ENCODE measurements at regions of chr3 and their contacts with region 1.

Region 1: DNA sequence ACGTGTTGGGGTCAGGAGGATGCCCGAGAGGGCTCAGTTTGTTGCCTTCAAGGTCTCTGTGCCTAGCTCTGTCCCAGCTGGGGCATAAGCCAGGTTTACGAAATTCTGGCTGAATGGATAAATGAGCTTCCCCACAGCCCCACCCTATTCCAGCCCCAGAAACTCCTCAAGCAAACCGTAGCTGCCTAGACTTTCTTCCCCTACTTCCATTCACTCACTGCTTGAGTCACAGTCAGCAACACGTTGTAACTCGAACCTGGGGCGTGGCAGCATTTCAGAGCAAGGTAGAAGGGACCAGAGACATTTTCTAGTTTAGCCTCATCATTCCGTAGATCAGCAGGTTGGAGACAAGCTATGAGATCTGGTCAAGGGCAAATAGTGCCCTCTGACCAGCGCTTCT is 24.2 kb downstream of the NMNAT3 start:
- DNase-seq: peak; percentile 95
- H3K4me3 ChIP-seq: no peak overlapping the region
- H3K27ac ChIP-seq: peak overlapping the region; percentile 61
- H3K4me1 ChIP-seq: peaks cover 21% of the 10 kb centered on the region
- H3K27me3 ChIP-seq: no peaks in the 10 kb centered on the region
- CTCF ChIP-seq: no peak

Region 2: DNA sequence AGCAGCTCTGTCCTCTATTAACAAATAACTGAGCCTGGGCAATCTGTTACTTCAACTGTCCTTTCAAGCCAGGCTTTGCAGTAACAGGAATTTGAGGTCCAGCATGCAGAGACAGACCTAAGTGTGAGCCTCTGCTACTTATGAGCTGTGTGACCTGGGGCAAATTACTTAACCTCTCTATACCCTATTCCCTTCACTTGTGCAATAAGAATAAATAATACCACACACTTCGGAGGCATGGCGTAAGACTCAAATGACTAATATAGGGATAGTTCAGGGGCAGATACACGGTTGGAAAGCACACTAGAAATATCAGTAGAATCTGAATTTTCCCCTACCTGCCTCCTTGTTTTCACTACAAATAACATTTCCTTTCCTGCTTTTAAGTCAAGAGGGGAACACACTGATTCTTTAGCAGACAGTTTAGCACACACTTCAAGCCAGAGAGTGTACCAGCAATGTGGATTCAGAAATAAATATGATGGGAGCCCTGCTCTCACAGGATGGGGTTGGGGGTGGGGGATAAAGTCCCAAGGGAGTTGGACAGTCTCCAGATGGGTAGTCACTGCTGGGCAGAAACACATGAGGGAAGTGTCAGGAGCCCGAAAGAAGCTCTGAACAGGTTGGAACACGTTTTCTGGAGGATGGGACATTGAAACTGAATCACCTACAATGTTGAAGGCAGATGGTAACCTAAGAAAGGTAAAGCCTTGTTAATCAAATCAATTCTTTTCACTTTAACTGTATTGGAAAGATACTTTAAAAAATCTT is 52.2 kb before region 1 on chr3:
- CTCF ChIA-PET with region 1: no interaction called
- dilution Hi-C with region 1: no loop called
- in situ Hi-C with region 1: no loop called
- intact Hi-C with region 1: loop called (anchors 2 kb)
- DNase-seq: peak; percentile 91
- H3K4me3 ChIP-seq: peak overlapping the region in 2 of 3 experiments; percentile 15 to 22
- H3K27ac ChIP-seq: peak overlapping the region; percentile 91
- H3K4me1 ChIP-seq: peaks cover 20% of the 10 kb centered on the region
- H3K27me3 ChIP-seq: no peaks in the 10 kb centered on the region
- CTCF ChIP-seq: no peak

Region 3: GRCh38 chr3:140023616-140024530 is 370.3 kb after region 1 on chr3:
- CTCF ChIA-PET with region 1: no interaction called
- dilution Hi-C with region 1: no loop called
- in situ Hi-C with region 1: no loop called
- intact Hi-C with region 1: no loop called
- DNase-seq: no peak
- H3K4me3 ChIP-seq: no peak overlapping the region
- H3K27ac ChIP-seq: no peak overlapping the region
- H3K4me1 ChIP-seq: no peaks in the 10 kb centered on the region
- H3K27me3 ChIP-seq: no peaks in the 10 kb centered on the region
- CTCF ChIP-seq: no peak

Region 4: GRCh38 chr3:141392897-141393734 is 1739.5 kb after region 1 on chr3:
- CTCF ChIA-PET with region 1: no interaction called
- dilution Hi-C with region 1: no loop called
- in situ Hi-C with region 1: no loop called
- intact Hi-C with region 1: no loop called
- DNase-seq: no peak
- H3K4me3 ChIP-seq: no peak overlapping the region
- H3K27ac ChIP-seq: no peak overlapping the region
- H3K4me1 ChIP-seq: peaks cover 9% of the 10 kb centered on the region
- H3K27me3 ChIP-seq: no peaks in the 10 kb centered on the region
- CTCF ChIP-seq: no peak